A673 (cell line): ENCODE measurements at regions of chr17 and their contacts with region 1.

Region 1: DNA sequence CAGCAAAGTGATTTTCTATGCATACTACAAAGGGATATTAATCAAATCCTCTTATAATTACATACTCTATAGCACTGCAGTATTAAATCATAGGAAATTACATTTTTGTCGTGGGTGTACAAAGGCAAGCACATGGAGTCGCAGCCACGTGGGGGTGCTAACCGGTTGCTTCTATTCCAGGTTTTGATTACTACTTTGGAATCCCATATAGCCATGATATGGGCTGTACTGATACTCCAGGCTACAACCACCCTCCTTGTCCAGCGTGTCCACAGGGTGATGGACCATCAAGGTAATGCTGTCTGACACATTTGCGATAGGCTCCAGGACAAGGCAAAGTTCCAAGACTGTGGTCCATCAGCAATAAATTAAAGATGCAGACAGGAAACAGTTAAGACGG is 60.1 kb downstream of the ARSG start:
- DNase-seq: peak; percentile 58
- H3K4me3 ChIP-seq: no peak overlapping the region
- H3K27ac ChIP-seq: no peak overlapping the region
- H3K4me1 ChIP-seq: peaks cover 9% of the 10 kb centered on the region
- H3K27me3 ChIP-seq: no peaks in the 10 kb centered on the region
- CTCF ChIP-seq: peak; percentile 64

Region 2: DNA sequence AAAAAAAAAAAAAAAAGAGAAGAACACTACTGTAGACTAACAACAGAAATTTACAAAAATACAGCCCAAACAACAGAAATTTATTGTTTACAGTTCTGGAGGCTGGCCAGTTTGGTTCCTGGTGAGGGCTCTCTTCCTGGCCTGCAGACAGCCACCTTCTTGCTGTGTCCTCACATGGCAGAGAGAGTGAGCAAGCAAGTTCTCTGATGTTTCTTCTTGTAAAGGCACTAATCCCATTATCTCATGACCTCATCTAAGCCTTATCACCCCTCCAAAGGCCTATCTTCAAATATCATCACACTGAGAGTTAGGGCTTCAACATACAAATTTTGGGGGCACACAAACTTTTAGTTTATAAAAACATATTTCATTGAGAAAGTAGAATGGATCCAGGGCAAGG is 52.8 kb before region 1 on chr17:
- CTCF ChIA-PET with region 1: no interaction called
- POLR2A ChIA-PET with region 1: interaction called, 11 read pairs
- intact Hi-C with region 1: no loop called
- DNase-seq: no peak
- H3K4me3 ChIP-seq: no peak overlapping the region
- H3K27ac ChIP-seq: no peak overlapping the region
- H3K4me1 ChIP-seq: no peaks in the 10 kb centered on the region
- H3K27me3 ChIP-seq: no peaks in the 10 kb centered on the region
- CTCF ChIP-seq: no peak

Region 3: DNA sequence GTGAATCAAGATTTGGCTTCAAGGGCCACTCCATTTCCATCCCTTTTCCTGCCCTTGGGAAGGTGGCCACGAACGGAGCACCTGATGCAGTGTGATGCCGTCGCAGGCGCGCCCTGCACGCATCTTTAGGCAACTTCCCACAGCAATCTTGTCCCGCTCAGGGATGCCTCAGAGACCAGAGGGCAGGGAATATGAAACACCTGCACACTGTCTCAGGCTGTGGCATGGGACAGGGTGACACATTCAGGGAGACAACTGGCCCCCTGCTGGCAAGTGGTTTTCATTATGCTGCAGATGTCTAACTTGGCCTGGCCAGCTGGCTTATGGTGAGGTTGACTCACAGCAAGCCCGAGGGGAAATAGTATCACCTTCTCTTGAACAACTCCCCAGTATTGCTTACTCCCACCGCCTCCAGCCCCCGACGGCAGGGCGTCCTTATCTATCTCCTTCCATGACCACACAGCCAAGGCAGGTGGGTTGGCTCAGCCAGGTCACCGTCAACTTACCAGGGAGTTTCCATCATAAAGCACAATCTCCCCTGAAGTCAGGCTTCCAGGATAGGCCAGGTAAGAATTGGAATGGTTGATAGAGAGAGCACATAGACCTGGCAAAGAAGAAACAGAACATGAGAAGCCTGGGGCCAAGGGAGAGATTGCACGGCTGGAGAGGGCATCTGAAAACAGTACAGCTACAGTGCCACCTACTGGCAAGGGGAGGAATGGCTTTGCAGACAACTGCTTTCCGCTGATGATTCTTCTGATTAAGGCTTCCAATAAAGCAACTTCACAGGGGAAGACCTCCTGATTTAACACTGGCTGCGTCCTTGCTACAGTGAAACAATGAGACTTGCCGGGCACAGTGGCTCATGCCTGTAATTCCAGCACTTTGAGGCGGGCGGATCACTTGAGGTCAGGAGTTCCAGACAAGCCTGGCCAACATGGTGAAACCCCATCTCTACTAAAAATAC is 84.8 kb after region 1 on chr17:
- CTCF ChIA-PET with region 1: interaction called, 7 read pairs
- POLR2A ChIA-PET with region 1: no interaction called
- intact Hi-C with region 1: loop called (anchors 5 kb)
- DNase-seq: peak; percentile 80
- H3K4me3 ChIP-seq: no peak overlapping the region
- H3K27ac ChIP-seq: no peak overlapping the region
- H3K4me1 ChIP-seq: no peaks in the 10 kb centered on the region
- H3K27me3 ChIP-seq: no peaks in the 10 kb centered on the region
- CTCF ChIP-seq: peak; percentile 93